ENCODE measurements at regions of chr1 and their contacts with region 1.

Region 1: DNA sequence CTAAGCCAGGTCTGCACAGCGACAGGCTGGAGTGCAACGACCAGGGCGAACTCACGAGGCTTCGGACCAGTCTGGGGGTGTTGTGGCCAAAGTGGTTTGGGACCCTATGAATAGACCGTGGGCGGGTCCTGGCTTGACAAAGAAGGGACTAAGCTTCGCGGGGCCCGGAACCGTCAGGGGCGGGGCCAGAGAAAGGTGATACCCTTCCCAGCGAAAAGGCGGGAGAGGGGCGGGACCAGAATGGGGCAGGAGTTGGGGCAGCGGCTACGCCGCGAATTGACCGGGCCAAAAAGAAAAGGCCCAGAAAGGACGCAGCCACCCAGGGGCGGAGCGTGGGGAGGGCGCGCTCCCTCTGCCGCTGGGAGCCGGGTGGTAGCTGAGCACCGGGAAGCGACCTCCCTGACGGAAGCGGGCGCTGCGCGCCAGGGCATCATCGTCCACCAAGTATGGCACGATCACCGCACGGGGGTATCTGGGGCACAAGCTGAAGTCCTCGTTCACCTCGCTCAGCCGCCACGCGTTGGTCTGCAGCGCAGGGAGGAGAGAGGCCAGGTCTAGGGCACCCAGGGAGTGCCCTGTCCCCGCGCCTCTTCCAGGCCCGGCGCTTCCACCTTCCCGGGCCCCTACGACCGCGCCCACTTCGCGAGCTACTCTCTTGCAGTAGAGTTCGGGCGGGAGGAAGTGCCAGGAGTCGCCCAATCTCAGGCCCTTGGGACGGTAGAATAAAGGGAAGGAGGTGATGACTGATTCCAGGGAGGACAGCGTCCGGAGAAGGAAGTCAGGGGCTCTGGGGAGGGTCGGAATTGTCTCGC is 6.7 kb upstream of the FAM167B start:
- DNase-seq: no peak
- H3K4me3 ChIP-seq: peak overlapping the region; percentile 40
- CTCF ChIP-seq: no peak

Region 2: GRCh38 chr1:32321712-32322291 is 81.5 kb after region 1 on chr1:
- in situ Hi-C with region 1: loop called (anchors 5 kb)
- DNase-seq: no peak
- H3K4me3 ChIP-seq: no peak overlapping the region
- CTCF ChIP-seq: no peak

Region 3: DNA sequence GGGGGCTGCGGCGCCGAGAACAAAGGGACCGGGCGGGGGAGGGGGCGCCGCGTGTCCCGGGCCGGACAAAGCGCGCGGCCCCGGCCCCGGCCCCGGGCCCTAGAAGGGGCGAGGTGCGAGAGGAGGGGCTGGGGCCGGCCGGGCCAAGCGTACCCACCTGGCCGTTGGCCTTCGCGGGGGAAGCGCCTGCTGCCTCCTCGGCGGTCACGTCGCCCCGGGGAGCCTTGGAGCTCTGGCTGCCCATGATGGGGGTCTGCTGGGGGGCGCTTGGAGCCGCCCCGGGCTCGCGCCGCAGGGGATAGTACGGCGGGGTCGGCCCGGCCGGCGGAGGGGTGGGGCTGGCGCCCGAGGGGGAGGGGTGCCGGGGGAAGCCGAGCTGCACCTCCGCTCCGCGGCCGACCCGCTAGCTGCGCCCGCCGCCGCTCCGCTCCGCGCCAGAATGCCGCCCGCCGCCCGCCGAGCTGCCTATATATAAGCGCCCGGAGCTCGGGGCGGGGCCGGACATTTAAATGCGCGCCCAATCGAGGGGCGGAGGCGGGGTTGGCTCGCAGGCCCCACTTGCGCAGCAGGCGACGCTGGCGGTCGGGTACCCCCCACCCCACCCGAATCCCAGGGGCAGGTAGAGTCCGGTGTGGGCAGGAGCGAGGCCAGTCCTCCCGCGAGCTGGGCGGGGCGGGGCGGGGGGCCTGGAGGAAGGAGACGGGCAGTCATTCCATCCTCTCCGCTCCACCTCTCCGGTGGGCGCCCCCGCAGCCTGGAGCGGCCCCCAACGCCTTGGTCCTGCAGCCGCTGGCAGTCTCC is 95.6 kb after region 1 on chr1 and contains the start of gene MARCKSL1:
- in situ Hi-C with region 1: no loop called
- DNase-seq: no peak
- H3K4me3 ChIP-seq: peak within 1 kb of the TSS; percentile 74
- CTCF ChIP-seq: no peak

Region 4: DNA sequence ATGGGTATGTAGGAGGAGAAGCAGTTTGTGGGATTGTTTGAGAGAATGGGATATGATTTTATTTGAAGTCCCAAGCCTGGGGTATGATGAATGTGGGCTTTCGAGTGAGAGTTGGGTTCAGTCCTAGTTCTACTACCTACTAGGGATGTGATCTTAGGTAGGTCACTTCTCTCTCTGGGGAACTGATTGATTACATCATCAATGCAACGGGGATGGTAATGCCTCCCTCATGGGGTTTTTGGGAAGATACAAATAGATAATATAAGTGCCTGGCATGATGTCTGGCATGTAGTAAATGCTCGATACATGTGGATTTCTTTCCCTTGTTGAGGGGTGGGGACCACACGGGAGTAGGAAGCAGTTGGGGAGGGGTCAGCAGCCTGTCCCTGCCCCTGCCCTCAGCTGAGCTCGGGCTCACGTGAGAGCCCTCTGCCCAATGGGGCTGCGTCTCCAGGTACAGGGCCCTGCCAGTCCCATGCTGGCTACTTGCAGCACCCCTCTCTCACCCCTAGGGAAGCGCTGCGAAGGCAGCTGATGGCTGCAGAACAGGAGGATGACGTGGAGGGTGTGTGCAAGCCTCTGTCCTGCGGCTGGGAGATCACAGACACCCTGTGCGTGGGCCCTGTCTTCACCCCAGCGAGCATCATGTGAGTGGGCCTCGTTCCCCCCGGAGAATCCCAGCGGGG is 879.3 kb after region 1 on chr1:
- in situ Hi-C with region 1: no loop called
- DNase-seq: no peak
- H3K4me3 ChIP-seq: no peak overlapping the region
- CTCF ChIP-seq: no peak